PC-9 (cell line): ENCODE measurements at regions of chr19 and their contacts with region 1.

Region 1: DNA sequence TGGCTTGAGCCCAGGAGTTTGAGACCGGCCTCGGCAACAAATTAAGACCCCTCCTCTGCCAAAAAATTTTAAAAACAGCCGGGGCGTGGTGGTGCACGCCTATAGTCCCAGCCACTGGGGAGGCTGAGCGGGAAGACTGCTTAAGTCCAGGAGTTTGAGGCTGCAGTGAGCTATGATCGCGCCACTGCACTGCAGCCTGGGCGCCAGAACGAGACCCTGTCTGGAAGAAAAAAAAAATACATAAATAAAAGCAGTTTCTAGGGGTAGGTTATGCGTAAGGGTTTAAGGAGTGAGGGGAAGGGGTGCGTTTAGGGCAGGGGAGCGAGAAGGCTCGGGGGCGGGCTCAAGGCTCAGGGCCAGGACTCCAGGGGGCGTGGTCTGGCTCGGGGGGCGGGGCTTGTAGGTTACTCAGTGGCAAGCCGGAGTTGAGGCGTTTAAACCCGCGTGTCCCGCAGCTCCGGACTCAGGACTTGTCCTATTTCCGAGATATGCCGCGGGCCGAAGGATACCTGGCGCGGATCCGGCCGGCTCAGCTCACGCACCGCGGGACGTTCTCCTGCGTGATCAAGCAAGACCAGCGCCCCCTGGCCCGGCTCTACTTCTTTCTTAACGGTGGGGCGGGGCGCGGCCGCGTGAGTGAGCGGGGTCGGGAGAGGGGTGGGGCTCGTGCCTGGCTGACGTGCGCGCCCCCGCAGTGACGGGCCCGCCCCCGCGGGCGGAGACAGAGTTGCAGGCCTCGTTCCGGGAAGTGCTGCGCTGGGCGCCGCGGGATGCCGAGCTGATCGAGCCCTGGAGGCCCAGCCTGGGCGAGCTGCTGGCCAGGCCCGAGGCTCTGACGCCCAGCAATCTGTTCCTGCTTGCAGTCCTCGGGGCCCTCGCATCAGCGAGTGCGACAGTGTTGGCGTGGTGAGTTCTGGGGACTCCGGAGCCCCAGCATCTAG is 10.7 kb downstream of the SPACA6 start:
- DNase-seq: peak; percentile 83 to 97
- H3K4me3 ChIP-seq: peak overlapping the region; percentile 70
- H3K27ac ChIP-seq: peak overlapping the region; percentile 26; the same call in 1 of the 2 replicates
- H3K4me1 ChIP-seq: peaks cover 8% of the 10 kb centered on the region; the same call in 1 of the 2 replicates
- H3K27me3 ChIP-seq: no peaks in the 10 kb centered on the region
- CTCF ChIP-seq: peak; percentile 62

Region 2: DNA sequence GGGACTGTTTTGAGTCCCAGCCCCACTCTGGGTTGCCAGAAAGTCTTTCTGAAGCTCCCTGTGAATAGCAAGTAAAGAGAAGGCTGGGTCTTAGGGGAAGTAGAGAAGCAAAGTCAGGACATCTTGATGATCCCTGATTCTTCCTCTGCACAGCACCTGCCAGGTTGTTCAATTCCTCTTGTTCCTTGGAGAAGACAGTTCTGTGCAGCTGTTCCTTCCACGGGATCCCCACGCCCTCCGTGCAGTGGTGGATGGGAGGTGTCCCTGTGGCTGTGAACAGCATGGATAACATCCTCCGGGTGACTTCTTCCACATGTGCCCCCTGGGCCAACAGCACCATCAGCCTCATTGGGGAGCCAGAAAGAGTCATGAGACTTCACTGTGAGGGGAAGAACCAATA is 421.5 kb before region 1 on chr19:
- CTCF ChIA-PET with region 1: no interaction called
- POLR2A ChIA-PET with region 1: no interaction called
- intact Hi-C with region 1: no loop called
- DNase-seq: no peak
- H3K4me3 ChIP-seq: no peak overlapping the region
- H3K27ac ChIP-seq: no peak overlapping the region
- H3K4me1 ChIP-seq: no peaks in the 10 kb centered on the region
- H3K27me3 ChIP-seq: peaks cover 65% of the 10 kb centered on the region
- CTCF ChIP-seq: no peak

Region 3: GRCh38 chr19:51593969-51594773 is 109.7 kb before region 1 on chr19:
- CTCF ChIA-PET with region 1: no interaction called
- POLR2A ChIA-PET with region 1: no interaction called
- intact Hi-C with region 1: loop called (anchors 5 kb)
- DNase-seq: peak; percentile 93 to 99
- H3K4me3 ChIP-seq: peak overlapping the region; percentile 70
- H3K27ac ChIP-seq: no peak overlapping the region
- H3K4me1 ChIP-seq: peaks cover 5% of the 10 kb centered on the region; the same call in 1 of the 2 replicates
- H3K27me3 ChIP-seq: 0 out of 2 replicates have a peak, but pooled peaks cover 10% of the 10 kb centered on the region
- CTCF ChIP-seq: no peak

Region 4: GRCh38 chr19:51926784-51927742 is 223.2 kb after region 1 on chr19 and contains the start of gene ZNF613:
- CTCF ChIA-PET with region 1: no interaction called
- POLR2A ChIA-PET with region 1: no interaction called
- intact Hi-C with region 1: loop called (anchors 10 kb)
- DNase-seq: peak; percentile 89 to 91
- H3K4me3 ChIP-seq: peak within 1 kb of the TSS; percentile 70
- H3K27ac ChIP-seq: peak within 1 kb of the TSS; percentile 69
- H3K4me1 ChIP-seq: peaks cover 5% of the 10 kb centered on the region
- H3K27me3 ChIP-seq: no peaks in the 10 kb centered on the region
- CTCF ChIP-seq: peak; percentile 55; the same call in 1 of the 2 replicates
- total RNA-seq, gene ZNF613: 4.8 and 5.6 TPM in 2 replicates